Activated T-helper 1 cell treated with anti-CD3 and anti-CD28 coated beads, Interleukin-12 subunit alpha, Interleukin-12 subunit beta, Interleukin-2, Interleukin-4 antibody, amounts not matched to agents 30 ng/mL and 10 ng/mL and 1 ng/mL, durations not matched to agents 14 hours and 24 hours and 36 hours (primary cell): ENCODE measurements at regions of chr12 and their contacts with region 1.

Region 1: DNA sequence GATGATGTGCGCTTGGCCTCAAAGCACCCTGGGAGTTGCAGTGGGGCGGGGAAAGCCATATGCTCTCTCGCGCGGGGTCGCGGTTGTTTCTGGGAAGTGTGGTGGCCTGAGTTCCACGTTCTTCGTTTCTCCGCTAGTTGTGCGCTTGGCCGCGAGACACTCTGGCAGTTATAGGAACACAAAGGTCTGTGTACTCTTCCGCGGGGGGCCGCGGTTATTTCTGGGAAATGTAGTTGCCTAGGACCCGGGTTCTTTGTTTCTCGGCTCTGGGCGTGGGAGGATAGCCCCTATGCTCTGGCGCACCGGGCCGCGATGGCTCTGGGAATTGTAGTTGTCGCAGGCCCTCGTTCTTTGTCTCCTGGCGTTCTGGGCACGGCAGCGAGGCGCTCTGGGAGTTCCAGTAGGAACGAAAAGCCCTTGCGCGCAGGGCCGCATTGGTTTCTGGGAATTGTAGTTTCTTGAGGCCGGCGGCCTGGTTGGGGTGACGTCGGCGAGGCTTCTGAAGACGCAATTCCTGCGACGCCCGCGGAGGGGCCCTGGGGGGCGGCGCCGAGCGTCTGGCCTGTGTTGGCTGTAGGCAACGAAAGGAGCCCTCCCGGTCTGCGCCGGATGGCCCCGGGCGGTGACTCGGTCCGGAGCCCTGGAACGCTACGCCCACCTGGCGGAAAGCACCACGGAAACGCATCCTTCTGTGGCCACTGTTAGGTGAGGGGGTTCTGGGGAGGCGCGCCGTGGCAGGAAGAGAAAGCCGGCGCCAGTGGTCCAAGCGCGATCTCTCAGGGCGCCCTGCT is at the start of gene ZNF140:
- DNase-seq: peak; percentile 93
- H3K4me3 Mint-ChIP-seq: no peak within 1 kb of the TSS
- H3K27ac Mint-ChIP-seq: peak within 1 kb of the TSS; percentile 84
- H3K4me1 Mint-ChIP-seq: no peaks in the 10 kb centered on the region
- H3K27me3 Mint-ChIP-seq: no peaks in the 10 kb centered on the region
- total RNA-seq, gene ZNF140: 15.0 and 15.1 TPM in 2 replicates

Region 2: GRCh38 chr12:132248453-132249167 is 832.0 kb before region 1 on chr12:
- intact Hi-C with region 1: no loop called
- DNase-seq: no peak
- H3K4me3 Mint-ChIP-seq: no peak overlapping the region
- H3K27ac Mint-ChIP-seq: no peak overlapping the region
- H3K4me1 Mint-ChIP-seq: no peaks in the 10 kb centered on the region
- H3K27me3 Mint-ChIP-seq: peaks cover 2% of the 10 kb centered on the region

Region 3: DNA sequence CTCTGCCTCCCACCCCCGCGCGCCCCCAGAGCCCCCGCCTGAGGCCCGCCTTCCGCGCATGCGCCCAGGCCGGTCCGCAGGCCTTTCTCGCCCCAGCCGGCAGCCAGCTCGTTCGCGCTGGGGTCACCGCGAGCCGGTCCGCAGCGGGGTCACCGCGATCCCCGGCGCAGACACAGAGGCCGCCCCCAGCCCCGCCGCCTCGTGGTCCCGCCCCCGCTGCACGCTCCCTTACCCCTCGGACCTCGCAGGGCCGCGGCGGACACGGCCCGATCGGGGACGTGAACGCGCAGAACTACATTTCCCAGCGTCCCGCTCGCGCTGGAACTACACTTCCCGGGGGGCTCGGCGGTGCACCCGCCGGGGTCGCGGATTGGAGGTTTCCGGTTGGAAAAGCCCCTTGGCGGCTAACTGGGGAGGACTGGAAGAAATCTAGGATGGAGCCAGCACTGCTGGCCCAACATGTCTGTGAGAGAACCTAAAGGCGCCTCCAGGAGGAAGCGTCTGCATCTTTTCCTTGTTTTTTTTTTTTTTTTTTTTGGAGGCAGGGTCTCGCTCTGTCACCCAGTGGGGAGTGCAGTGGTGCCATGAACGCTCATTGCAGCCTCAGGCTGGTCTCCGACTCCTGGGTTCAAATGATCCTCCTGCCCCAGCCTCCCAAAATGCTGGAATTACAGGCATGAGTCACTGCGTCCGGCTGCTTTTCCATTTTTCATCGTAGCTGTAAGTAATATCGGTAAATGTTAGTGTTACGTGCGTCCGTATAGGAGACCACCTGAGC is 124.4 kb before region 1 on chr12 and contains the start of gene ZNF605:
- intact Hi-C with region 1: loop called (anchors 1 kb)
- DNase-seq: peak; percentile 85
- H3K4me3 Mint-ChIP-seq: peak within 1 kb of the TSS; percentile 98
- H3K27ac Mint-ChIP-seq: peak within 1 kb of the TSS; percentile 94
- H3K4me1 Mint-ChIP-seq: peaks cover 18% of the 10 kb centered on the region
- H3K27me3 Mint-ChIP-seq: no peaks in the 10 kb centered on the region
- total RNA-seq, gene ZNF605: 6.3 and 7.5 TPM in 2 replicates

Region 4: GRCh38 chr12:132986001-132986912 is 94.3 kb before region 1 on chr12 and contains the start of gene ZNF26:
- intact Hi-C with region 1: loop called (anchors 1 kb)
- DNase-seq: peak; percentile 84
- H3K4me3 Mint-ChIP-seq: peak within 1 kb of the TSS; percentile 90
- H3K27ac Mint-ChIP-seq: peak within 1 kb of the TSS; percentile 92
- H3K4me1 Mint-ChIP-seq: peaks cover 22% of the 10 kb centered on the region
- H3K27me3 Mint-ChIP-seq: no peaks in the 10 kb centered on the region
- total RNA-seq, gene ZNF26: 18.2 and 22.1 TPM in 2 replicates

Region 5: GRCh38 chr12:133165776-133166175 is 85.2 kb after region 1 on chr12:
- intact Hi-C with region 1: no loop called
- DNase-seq: no peak
- H3K4me3 Mint-ChIP-seq: no peak overlapping the region
- H3K27ac Mint-ChIP-seq: no peak overlapping the region
- H3K4me1 Mint-ChIP-seq: no peaks in the 10 kb centered on the region
- H3K27me3 Mint-ChIP-seq: no peaks in the 10 kb centered on the region

Region 6: GRCh38 chr12:133217219-133217618 is 136.7 kb after region 1 on chr12:
- intact Hi-C with region 1: no loop called
- DNase-seq: no peak
- H3K4me3 Mint-ChIP-seq: no peak overlapping the region
- H3K27ac Mint-ChIP-seq: no peak overlapping the region
- H3K4me1 Mint-ChIP-seq: no peaks in the 10 kb centered on the region
- H3K27me3 Mint-ChIP-seq: no peaks in the 10 kb centered on the region